Activated CD4-positive, alpha-beta memory T cell treated with anti-CD3 and anti-CD28 coated beads, Interleukin-2, amount 10 ng/mL, durations not matched to agents 7 days and 5 days (primary cell): ENCODE measurements at regions of chr12 and their contacts with region 1.

Region 1: GRCh38 chr12:62588916-62589315 is 122.3 kb downstream of the MON2 start:
- DNase-seq: no peak
- H3K4me3 Mint-ChIP-seq: no peak overlapping the region
- H3K27ac Mint-ChIP-seq: no peak overlapping the region
- H3K4me1 Mint-ChIP-seq: no peaks in the 10 kb centered on the region
- H3K27me3 Mint-ChIP-seq: no peaks in the 10 kb centered on the region

Region 2: DNA sequence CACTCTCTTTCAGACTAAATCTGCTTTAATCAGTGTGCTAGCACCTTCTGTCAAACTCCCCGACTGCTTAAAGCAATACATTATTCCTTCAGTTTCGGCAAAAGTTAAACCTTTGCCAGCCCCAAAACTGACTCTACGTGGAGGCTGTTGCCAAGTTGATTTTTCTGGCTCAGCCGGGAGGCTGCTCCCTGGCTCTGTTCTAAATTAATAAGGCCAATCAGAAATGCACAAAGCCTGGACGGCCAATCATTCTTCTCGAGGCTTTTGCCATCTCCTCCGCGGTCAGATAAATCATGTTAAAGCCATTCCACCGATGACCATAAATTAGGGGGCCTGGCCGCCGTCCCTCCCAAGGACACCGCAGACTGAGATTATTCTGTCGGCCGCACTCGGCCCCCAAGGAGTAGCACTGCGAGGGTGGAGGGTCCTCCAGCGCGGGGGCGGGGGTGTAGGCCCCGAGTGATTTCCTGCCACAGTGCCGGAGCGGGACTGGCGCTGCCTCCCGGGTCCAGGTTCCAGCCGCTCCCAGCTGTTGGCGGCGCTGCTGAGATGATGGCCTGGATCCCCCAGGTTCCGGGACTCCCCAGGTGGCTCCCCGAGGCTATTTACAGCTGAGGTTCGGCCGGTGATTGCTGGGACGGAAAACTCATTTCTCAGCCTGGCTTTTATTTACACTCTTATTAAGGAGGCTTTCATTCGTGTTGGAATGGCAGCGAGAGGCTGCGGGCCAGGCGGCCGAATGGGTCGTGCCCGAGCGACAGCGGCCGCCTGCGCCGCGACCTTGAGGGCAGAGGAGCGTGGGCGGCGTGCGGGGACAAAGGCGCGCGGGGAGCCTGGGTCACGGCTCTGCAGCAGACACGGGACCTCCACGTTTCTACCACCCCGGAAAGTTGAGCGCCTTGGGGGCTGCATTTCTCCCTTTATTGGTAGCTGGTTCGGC is 42.8 kb after region 1 on chr12:
- CTCF ChIA-PET with region 1: no interaction called
- POLR2A ChIA-PET with region 1: no interaction called
- DNase-seq: no peak
- H3K4me3 Mint-ChIP-seq: peak overlapping the region; percentile 54
- H3K27ac Mint-ChIP-seq: no peak overlapping the region
- H3K4me1 Mint-ChIP-seq: peaks cover 4% of the 10 kb centered on the region
- H3K27me3 Mint-ChIP-seq: peaks cover 71% of the 10 kb centered on the region

Region 3: GRCh38 chr12:62738616-62739015 is 149.7 kb after region 1 on chr12:
- CTCF ChIA-PET with region 1: no interaction called
- POLR2A ChIA-PET with region 1: no interaction called
- DNase-seq: no peak
- H3K4me3 Mint-ChIP-seq: no peak overlapping the region
- H3K27ac Mint-ChIP-seq: no peak overlapping the region
- H3K4me1 Mint-ChIP-seq: peaks cover 3% of the 10 kb centered on the region
- H3K27me3 Mint-ChIP-seq: peaks cover 2% of the 10 kb centered on the region

Region 4: DNA sequence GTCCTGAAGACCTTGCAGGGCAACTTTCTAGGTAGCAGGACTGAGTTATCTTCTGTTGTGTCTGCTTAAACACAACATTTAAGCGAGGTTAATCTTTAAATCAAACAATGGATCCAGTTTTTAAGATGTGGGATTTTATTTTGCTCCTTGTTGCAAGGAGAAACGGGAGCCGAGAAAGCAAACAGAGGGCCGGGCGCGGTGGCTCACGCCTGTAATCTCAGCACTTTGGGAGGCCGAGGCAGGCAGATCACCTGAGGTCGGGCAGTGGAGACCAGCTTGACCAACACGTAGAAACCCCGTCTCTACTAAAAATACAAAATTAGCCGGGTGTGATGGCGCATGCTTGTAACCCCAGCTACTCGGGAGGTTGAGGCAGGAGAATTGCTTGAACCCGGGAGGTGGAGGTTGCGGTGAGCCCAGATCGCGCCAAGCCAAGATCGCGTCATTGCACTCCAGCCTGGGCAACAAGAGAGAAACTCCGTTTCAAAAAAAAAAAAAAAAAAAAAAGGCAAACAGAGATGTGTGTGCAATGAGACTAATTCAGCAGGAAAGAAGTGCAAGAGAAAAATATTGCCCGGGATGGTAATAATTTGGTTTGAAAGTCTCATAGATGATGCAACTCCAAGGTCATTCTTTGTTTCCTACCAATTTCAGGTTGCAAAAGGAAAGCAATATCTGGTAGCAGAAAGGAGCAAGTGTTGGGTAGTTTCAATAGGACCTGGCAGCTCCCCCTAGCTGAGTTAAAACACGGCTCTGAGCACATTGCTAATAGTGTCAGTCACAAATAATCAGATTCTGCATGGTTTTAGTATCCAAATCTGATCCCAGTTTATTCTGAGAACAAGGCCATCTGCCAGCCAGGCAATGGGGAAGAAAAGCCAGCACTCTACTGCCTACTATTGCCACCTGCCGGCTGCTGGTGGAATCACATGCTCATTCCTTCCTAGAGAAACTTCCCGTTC is 204.6 kb after region 1 on chr12:
- CTCF ChIA-PET with region 1: interaction called, 106 read pairs
- POLR2A ChIA-PET with region 1: no interaction called
- DNase-seq: peak; percentile 74
- H3K4me3 Mint-ChIP-seq: no peak overlapping the region
- H3K27ac Mint-ChIP-seq: no peak overlapping the region
- H3K4me1 Mint-ChIP-seq: peaks cover 3% of the 10 kb centered on the region
- H3K27me3 Mint-ChIP-seq: peaks cover 5% of the 10 kb centered on the region